Sciatic nerve (tissue), 2 donors: ENCODE measurements at regions of chr7 and their contacts with region 1.

Region 1: DNA sequence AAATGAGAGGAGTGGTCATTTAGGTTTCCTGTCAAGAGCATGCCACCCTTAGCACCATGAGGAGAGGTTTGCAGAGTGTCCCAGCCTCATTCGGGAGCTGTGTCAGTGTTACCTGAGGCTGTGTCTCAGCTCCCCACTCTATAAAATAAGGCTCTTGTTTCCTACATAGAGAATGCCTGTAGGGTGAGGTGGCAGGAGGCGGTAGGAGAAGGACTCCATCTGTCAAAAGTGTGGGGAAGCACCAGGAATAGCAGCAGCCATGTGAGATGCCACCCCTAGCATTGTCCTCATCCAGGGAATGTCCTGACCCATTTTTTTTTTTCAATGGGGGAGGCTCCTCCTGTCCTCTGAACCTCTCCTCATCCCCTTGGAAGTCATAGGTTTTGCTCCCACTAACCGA is 451.2 kb downstream of the PLXNA4 start:
- DNase-seq: no peak
- ATAC-seq: no peak

Region 2: GRCh38 chr7:132160611-132161532 is 35.8 kb after region 1 on chr7:
- intact Hi-C with region 1: no loop called
- DNase-seq: no peak
- ATAC-seq: peak; percentile 59

Region 3: DNA sequence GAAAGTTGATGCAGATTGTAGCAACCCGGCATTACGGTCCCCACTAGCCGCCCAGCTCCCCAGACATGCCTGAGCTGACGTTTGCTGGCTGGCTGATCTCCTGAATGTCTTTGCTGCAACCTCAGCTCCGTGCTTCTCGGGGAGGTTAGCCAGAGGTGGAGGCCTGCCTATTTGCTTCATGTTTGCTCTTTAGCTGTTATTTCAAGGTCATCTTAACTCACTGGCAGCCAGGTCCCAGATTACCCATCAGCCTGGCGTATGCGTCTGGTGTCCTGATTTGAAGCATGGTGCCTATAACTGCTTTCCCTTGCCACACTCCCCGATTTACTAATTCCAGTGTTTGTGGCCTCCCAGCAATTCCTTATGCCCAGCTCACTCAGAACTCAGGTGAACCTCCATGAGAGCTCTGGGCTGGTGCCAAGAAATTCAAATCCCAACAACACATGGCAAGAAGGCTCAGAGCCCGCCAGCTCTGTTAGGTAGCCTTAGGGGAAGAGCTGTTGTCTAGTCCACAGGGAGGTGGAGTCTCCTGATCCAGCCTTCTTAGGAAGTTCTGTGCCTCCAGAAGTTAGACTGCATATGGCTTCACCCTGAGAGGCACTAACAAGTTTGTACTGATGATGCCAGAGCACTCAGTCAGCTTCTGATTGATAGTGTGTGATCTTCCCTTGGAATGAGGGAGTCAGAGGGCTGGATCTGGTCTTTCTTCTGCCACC is 1058.1 kb after region 1 on chr7:
- intact Hi-C with region 1: loop called (anchors 10 kb)
- DNase-seq: no peak
- ATAC-seq: no peak